ENCODE measurements at regions of chrX and their contacts with region 1.

Region 1: DNA sequence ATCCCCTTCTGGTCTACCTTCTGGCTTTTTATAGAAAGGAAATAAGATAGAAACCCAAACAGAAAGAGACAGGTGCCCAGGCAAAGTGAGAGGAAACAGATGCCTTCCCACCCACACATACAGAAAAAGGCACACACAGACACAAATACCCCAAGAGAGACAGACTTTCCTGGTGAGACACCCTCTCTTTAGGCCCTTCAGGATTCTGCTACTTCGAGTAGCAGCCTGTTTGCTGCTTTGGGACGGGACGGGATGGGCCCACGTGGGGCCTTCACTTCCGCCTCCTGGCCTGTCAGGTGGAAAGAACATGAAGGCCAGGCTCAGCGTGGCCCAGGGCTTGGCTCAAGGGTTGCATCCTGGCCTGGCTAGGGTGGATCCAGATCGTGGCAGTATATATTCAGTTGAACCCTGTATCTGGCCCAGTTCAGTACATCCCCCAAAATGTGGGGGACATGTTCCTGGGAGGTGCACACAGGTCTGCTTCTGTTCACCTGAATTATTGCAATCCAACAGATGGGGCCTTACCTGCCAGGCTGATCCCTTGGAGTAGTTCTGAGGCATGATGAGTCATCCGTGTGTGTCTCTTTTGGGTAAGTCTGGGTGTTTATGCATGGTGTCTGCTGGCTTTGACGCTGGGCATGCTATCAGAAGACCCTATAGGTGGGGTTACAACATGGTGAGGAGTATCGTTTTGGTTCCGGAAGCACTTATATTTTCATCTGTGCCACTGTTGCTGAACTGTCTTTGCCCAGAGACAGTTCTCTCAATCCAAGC is 2.4 kb downstream of the ZNF275 start:
- DNase-seq: no peak
- H3K4me3 ChIP-seq: no peak overlapping the region
- H3K27ac ChIP-seq: no peak overlapping the region
- H3K4me1 ChIP-seq: no peaks in the 10 kb centered on the region
- H3K27me3 ChIP-seq: no peaks in the 10 kb centered on the region
- CTCF ChIP-seq: no peak

Region 2: GRCh38 chrX:153317996-153318722 is 18.1 kb before region 1 on chrX:
- CTCF ChIA-PET with region 1: no interaction called
- POLR2A ChIA-PET with region 1: no interaction called
- intact Hi-C with region 1: no loop called
- DNase-seq: no peak
- H3K4me3 ChIP-seq: no peak overlapping the region
- H3K27ac ChIP-seq: no peak overlapping the region
- H3K4me1 ChIP-seq: no peaks in the 10 kb centered on the region
- H3K27me3 ChIP-seq: peaks cover 27% of the 10 kb centered on the region; the same call in 1 of the 2 replicates
- CTCF ChIP-seq: no peak

Region 3: GRCh38 chrX:153411255-153411987 is 75.1 kb after region 1 on chrX and contains the start of gene ZFP92:
- CTCF ChIA-PET with region 1: no interaction called
- POLR2A ChIA-PET with region 1: no interaction called
- intact Hi-C with region 1: no loop called
- DNase-seq: no peak
- H3K4me3 ChIP-seq: no peak within 1 kb of the TSS
- H3K27ac ChIP-seq: no peak within 1 kb of the TSS
- H3K4me1 ChIP-seq: no peaks in the 10 kb centered on the region
- H3K27me3 ChIP-seq: peaks cover 78% of the 10 kb centered on the region
- CTCF ChIP-seq: no peak
- total RNA-seq, gene ZFP92: not detected in 2 replicates

Region 4: DNA sequence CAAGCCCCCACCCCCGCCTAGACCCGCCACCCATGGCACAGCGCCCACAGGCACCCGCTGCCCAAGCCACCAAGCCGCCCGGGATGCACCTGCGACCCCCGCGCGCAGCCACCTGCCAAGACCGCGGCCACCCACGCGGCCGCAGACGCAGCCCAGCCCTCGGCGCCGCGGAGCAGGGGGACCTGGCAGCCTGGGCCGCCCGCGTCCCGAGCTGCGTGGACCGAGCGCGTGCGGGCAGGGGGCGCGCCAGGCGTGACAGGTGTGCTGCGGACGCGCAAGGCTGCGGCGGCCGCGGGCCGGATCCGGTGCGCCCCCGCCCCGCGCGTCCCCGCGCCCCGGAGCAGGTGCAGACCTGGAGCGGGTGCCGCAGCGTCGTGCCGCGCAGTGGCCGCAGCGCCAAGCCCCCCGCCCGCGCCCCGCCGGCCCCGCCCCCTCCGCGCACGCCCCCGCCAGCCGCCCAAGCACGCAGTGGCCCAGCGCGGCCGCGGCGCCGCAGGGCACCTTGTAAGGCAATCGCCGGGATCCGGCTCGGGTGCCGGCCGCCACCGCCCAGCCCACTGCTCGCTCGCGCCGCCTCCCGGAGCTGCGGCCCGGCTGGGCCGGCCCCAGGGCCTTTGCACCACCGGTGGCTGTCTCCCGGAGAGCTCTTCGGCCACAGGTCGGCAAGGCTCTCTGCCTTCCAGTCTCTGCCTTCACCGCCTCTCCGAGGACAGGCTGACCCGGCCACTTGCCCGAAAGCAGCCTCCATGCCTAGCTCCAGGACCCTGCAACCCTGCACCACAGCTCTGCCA is 337.3 kb after region 1 on chrX and contains the start of gene PNCK:
- CTCF ChIA-PET with region 1: interaction called, 10 read pairs
- POLR2A ChIA-PET with region 1: no interaction called
- intact Hi-C with region 1: no loop called
- DNase-seq: no peak
- H3K4me3 ChIP-seq: no peak within 1 kb of the TSS
- H3K27ac ChIP-seq: no peak within 1 kb of the TSS
- H3K4me1 ChIP-seq: no peaks in the 10 kb centered on the region
- H3K27me3 ChIP-seq: no peaks in the 10 kb centered on the region
- CTCF ChIP-seq: no peak
- total RNA-seq, gene PNCK: 1.0 and 4.4 TPM in 2 replicates

Measured in PC-9 (cell line).